ENCODE measurements at regions of chr10 and their contacts with region 1.

Region 1: DNA sequence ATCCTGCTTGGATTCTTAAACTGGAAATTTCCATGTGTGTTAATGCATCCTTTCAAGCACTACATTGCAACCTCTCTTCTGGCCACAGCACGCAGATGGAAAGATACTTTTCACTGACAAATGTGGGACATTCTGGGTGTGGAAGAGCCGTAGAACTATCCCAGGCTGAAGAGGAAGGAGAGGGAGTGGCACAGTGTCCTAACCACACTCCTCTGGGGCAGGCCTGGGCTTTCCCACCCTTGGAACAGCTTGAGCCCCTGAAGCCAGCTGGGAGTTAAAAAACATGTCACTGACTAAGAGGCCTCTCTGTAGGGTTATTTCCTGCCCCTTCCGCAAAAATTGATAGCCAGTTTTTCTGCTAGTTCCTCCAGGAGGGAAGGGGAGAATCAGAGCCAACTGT is 34.1 kb upstream of the DNMBP start:
- DNase-seq: no peak
- H3K4me3 ChIP-seq: no peak overlapping the region
- H3K27ac ChIP-seq: peak overlapping the region; percentile 77
- H3K4me1 ChIP-seq: peaks cover 46% of the 10 kb centered on the region
- H3K27me3 ChIP-seq: no peaks in the 10 kb centered on the region
- CTCF ChIP-seq: no peak
- POLR2A ChIP-seq: no peak

Region 2: GRCh38 chr10:99845837-99846382 is 197.9 kb before region 1 on chr10:
- intact Hi-C with region 1: loop called (anchors 2 kb)
- DNase-seq: peak in 1 of 2 donors; percentile 93
- H3K4me3 ChIP-seq: peak overlapping the region; percentile 24 to 34
- H3K27ac ChIP-seq: peak overlapping the region; percentile 38
- H3K4me1 ChIP-seq: no peaks in the 10 kb centered on the region
- H3K27me3 ChIP-seq: no peaks in the 10 kb centered on the region
- CTCF ChIP-seq: peak; percentile 97 to 98 (median 97)
- POLR2A ChIP-seq: no peak

Region 3: DNA sequence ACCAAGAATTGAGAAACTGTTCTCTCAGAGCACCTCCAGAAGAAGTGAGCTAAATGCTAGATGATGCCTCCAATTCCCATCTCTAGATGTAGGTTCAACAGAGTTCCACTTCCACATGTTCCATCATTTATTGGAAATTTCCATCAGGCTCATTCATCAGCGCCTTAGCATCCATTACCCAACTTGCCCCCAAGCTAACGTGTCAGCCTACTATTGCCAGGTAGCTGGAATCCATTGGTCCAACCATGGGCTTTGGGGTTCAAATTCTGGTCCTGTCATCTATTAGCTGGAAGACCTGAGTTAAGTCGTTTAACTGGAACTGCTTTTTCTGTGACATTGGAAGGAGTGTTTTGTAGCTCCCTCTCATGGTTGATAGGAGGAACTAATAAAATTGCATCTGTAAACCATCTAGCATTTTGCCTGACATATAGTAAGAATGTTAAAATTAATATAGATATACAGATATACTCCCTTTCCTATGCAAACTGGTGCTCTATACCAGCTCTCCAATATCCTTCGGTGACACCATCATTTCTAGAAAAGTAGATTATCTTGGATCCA is 845.1 kb after region 1 on chr10:
- intact Hi-C with region 1: no loop called
- DNase-seq: no peak
- H3K4me3 ChIP-seq: no peak overlapping the region
- H3K27ac ChIP-seq: no peak overlapping the region
- H3K4me1 ChIP-seq: no peaks in the 10 kb centered on the region
- H3K27me3 ChIP-seq: no peaks in the 10 kb centered on the region
- CTCF ChIP-seq: no peak
- POLR2A ChIP-seq: no peak